Dendritic cell treated with granulocyte-macrophage colony-stimulating factor and Interleukin-4, amounts not matched to agents 40 ng/mL and 50 ng/mL, for 4 days (primary cell): ENCODE measurements at regions of chr7 and their contacts with region 1.

Region 1: DNA sequence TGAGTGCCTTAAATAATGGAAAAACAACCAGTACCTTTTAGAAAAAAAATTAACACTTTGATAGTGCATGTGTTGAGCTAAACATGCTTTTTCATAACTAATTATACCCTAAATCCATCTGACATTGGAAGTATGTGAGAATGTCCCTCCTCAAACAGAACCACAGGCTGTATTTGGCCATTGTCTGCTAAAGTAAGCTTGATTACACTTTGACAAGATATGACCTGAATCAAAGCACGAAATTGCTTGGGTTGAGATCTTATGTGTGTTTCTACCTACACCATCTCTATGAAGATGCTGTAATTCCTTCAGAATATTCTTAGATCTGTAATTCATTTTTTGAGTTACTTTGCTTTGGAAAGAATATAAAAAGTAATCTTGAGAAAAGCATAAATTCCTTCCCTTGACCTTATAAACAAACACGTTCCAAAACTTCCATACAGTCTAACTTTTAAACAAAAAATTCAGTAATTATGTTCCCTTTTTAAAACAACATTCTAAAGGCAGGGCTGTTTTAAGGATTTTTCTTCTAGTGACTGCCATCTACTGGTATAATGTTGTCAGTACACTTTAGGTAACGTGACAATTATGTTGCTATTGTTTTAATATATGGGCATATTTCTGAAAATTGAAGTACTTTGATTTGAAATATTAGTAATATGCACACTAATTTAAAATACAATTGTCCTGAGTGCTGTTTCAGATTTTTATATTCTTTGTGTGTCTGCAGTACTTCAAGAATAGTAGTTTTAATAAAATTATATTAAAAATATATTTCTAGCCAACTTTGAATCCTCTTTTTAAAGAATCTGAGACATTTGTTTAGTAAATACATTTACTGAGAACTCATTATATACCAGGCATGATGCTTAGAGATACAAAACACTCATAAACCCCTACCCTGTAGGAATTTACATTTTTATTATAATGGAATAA is 20.9 kb downstream of the CD36 start:
- H3K4me3 Mint-ChIP-seq: no peak overlapping the region
- H3K27ac Mint-ChIP-seq: no peak overlapping the region
- H3K4me1 Mint-ChIP-seq: peaks cover 4% of the 10 kb centered on the region
- H3K27me3 Mint-ChIP-seq: no peaks in the 10 kb centered on the region

Region 2: DNA sequence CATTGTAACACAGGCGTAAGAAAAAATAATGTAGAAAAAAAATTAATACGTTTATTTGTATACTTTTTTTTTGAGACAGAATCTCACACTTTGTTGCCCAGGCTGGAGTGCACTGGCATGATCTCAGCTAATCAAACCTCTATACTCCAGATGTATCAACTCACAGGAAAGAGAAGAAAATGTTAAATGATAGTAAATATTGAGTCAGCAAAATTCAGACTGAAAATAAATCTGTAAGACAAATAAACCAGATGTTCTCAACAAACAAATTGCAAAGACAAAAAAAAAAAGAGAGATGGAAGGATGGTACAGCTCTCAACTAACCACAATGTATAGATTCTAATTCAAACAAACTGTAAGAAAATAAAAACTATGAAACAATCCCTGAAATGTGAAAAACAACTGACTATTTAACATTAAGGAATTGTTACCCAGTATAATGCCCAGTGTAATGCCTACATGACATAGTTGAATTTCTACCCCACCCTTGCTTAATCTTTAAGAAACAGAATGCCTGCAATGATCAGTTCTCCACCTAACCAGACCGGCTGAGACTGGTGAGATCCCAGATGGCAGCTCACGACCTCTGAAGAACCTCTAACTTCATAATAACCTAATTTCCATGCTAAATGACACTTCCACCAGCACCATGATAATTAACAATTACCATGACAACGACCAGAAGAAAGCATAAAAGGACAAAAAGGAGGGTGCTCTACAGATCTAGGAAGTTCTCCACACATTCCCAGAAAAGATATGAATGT is 796.8 kb before region 1 on chr7:
- intact Hi-C with region 1: no loop called
- H3K4me3 Mint-ChIP-seq: no peak overlapping the region
- H3K27ac Mint-ChIP-seq: no peak overlapping the region
- H3K4me1 Mint-ChIP-seq: no peaks in the 10 kb centered on the region
- H3K27me3 Mint-ChIP-seq: no peaks in the 10 kb centered on the region

Region 3: GRCh38 chr7:80428161-80429054 is 231.0 kb before region 1 on chr7:
- intact Hi-C with region 1: loop called (anchors 1 kb)
- H3K4me3 Mint-ChIP-seq: no peak overlapping the region
- H3K27ac Mint-ChIP-seq: no peak overlapping the region
- H3K4me1 Mint-ChIP-seq: peaks cover 13% of the 10 kb centered on the region
- H3K27me3 Mint-ChIP-seq: no peaks in the 10 kb centered on the region